ENCODE measurements at regions of chr6 and their contacts with region 1.

Region 1: DNA sequence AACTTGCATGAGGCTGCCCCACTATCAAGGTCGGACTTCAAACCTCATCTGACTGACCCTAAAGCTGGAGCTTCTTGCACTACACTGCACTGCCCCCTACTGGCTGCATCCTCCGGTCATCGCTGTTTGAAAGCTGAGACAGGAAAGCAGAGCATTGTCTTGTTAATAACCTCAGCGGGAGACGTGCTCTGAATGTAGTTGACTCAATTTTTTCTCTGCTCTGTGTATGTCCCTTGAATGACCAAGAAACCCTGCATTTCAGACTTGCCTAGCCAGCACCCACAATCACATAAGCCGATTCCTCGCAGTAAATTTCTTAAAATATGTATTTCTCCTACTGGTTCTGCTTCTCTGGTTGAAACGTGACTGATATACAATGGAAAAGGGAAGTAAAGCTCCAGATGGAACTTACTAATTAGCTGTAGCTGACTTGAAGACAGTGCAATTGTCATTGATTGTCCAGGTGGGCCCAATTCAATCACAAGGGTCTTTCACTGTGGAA is 27.8 kb downstream of the TCF21 start:
- DNase-seq: peak; percentile 87
- ATAC-seq: peak; percentile 55 to 91 (median 85)
- H3K4me3 ChIP-seq: no peak overlapping the region
- H3K27ac ChIP-seq: no peak overlapping the region
- H3K4me1 ChIP-seq: peaks cover 0 to 11% (median 0%) of the 10 kb centered on the region in 9 donors
- H3K27me3 ChIP-seq: peaks cover 0 to 12% (median 0%) of the 10 kb centered on the region in 7 donors
- CTCF ChIP-seq: peak; percentile 56 to 94 (median 88)

Region 2: DNA sequence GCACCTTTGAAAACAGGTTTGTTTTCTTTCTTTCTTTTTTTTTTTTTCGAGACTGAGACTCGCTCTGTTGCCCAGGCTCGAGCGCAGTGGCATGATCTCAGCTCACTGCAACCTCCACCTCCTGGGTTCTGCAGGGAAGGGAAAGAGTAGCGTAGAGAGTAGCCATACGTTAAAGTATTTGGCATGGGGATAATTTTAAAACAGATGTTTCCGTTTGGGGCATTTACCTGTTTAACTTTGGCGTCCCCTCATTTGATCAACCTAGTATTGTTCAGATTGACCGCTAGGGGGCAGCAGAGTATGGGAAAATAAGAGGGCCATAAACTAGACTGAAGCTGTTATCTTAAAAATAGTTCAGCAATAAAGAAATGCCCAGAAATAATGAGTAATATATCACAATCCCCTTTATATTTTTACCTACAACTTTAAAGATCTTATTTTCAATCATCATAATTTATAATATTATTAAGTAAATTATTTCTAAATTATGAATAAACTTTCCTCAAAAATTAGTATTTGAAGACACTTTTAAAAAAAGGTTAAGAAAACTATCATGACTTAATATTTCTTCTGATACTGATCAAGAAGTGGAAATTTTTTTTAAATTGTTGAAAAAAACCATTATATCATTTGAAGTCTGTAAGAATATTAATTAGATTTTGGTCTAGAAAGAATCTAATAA is 1386.3 kb before region 1 on chr6:
- intact Hi-C with region 1: loop called in 3 of 10 experiments (anchors 5 to 10 kb)
- DNase-seq: peak in 1 of 2 donors; percentile 61
- ATAC-seq: peak in 6 of 8 donors; percentile 64 to 77 (median 73)
- H3K4me3 ChIP-seq: no peak overlapping the region
- H3K27ac ChIP-seq: no peak overlapping the region
- H3K4me1 ChIP-seq: no peaks in the 10 kb centered on the region
- H3K27me3 ChIP-seq: peaks cover 0 to 22% (median 6%) of the 10 kb centered on the region in 7 donors
- CTCF ChIP-seq: peak; percentile 69 to 90 (median 88)

Region 3: DNA sequence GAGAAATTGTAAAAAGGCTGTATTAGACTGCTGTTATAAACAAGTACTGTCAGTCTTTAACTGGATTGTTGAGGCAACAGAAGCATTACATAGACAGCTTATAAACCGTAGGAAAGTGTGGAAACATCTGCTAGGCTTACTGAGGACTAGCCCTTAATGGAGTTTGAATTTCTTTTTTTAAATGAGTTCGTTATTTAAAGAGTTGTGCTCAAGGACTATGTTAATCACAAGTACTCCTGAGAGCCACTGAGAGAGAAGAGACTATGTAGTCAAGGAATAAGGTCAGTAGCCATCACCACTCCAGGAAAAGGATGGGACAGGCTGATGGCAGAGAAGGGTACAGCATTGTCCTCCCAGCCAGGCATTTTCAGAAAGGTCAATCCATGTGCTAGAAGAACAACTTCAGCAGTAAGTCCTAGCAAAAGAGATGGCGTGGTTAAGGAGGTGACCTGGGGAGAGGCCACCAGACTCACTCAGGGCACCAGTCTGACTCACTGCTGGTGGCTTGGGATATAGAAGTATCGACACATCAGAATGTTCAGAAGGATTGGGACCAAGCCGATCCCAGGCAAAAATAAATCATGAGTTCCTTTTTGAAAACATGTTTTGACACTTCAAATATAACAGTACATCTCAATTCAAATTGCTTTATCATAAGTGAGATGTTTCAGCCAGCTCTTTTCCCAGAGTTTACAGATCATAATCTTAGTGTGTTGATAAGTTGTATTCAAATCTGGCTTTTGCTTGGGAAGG is 1095.9 kb before region 1 on chr6:
- intact Hi-C with region 1: loop called in 1 of 10 experiments (anchors 5 kb)
- DNase-seq: no peak
- ATAC-seq: peak in 2 of 8 donors; percentile 34 to 39
- H3K4me3 ChIP-seq: no peak overlapping the region
- H3K27ac ChIP-seq: no peak overlapping the region
- H3K4me1 ChIP-seq: peaks cover 0 to 27% (median 19%) of the 10 kb centered on the region in 9 donors
- H3K27me3 ChIP-seq: no peaks in the 10 kb centered on the region
- CTCF ChIP-seq: no peak

Region 4: GRCh38 chr6:132830334-132830751 is 1086.4 kb before region 1 on chr6:
- intact Hi-C with region 1: loop called in 2 of 10 experiments (anchors 10 kb)
- DNase-seq: peak in 1 of 2 donors; percentile 9
- ATAC-seq: peak in 1 of 8 donors; percentile 57
- H3K4me3 ChIP-seq: no peak overlapping the region
- H3K27ac ChIP-seq: no peak overlapping the region
- H3K4me1 ChIP-seq: no peaks in the 10 kb centered on the region
- H3K27me3 ChIP-seq: no peaks in the 10 kb centered on the region
- CTCF ChIP-seq: peak in 7 of 9 donors; percentile 33 to 62 (median 58)

Region 5: GRCh38 chr6:133568970-133569889 is 347.5 kb before region 1 on chr6:
- intact Hi-C with region 1: loop called (anchors 1 to 5 kb)
- DNase-seq: peak in 1 of 2 donors; percentile 16
- ATAC-seq: peak; percentile 68 to 90 (median 80)
- H3K4me3 ChIP-seq: peak overlapping the region; percentile 5 to 56 (median 44)
- H3K27ac ChIP-seq: peak overlapping the region in 5 of 10 donors; percentile 10 to 45 (median 29)
- H3K4me1 ChIP-seq: peaks cover 0 to 7% (median 0%) of the 10 kb centered on the region in 9 donors
- H3K27me3 ChIP-seq: peaks cover 0 to 12% (median 0%) of the 10 kb centered on the region in 7 donors
- CTCF ChIP-seq: peak; percentile 57 to 92 (median 81)

Region 6: GRCh38 chr6:133837801-133838349 is 78.8 kb before region 1 on chr6:
- intact Hi-C with region 1: loop called in 2 of 10 experiments (anchors 2 to 5 kb)
- DNase-seq: peak in 1 of 2 donors; percentile 38
- ATAC-seq: peak in 2 of 8 donors; percentile 63 to 65
- H3K4me3 ChIP-seq: peak overlapping the region in 8 of 10 donors; percentile 21 to 46 (median 36)
- H3K27ac ChIP-seq: no peak overlapping the region
- H3K4me1 ChIP-seq: peaks cover 0 to 6% (median 0%) of the 10 kb centered on the region in 9 donors
- H3K27me3 ChIP-seq: peaks cover 0 to 39% (median 17%) of the 10 kb centered on the region in 7 donors
- CTCF ChIP-seq: peak in 8 of 9 donors; percentile 8 to 69 (median 56)